ENCODE measurements at regions of chr14 and their contacts with region 1.

Region 1: DNA sequence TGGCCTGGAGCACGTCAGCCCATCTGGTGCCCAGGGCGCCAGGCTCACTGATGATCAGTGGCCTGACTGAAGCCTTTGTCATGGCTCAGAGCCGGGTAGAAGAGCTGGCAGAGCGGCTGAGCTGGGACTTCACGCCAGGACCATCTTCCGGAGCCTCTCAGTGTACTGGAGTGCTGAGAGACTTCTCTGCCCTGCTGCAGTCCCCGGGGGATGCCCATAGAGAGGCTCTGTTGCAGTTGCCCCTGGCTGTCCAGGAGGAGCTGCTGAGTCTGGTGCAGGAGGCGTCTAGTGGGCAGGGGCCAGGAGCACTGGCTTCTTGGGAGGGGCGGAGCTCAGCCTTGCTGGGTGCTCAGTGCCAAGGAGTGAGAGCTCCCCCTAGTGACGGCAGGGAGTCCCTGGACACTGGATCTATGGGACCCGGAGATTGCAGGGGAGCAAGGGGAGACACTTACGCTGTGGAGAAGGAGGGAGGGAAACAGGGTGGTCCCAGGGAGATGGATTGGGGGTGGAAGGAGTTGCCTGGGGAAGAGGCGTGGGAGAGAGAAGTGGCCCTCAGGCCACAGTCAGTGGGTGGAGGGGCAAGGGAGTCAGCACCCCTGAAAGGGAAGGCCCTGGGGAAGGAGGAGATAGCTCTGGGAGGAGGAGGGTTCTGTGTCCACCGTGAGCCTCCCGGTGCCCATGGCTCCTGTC is 2.0 kb downstream of the KHNYN start:
- DNase-seq: peak; percentile 93
- H3K4me3 ChIP-seq: peak overlapping the region; percentile 71 to 87
- H3K27ac ChIP-seq: peak overlapping the region in 1 of 2 experiments; percentile 40; a peak in 1 of 4 replicates
- H3K4me1 ChIP-seq: peaks cover 21 to 26% of the 10 kb centered on the region in 2 experiments; a peak in 2 of 4 replicates
- H3K27me3 ChIP-seq: no peaks in the 10 kb centered on the region
- CTCF ChIP-seq: peak; percentile 96
- EP300 ChIP-seq: no peak
- RAD21 ChIP-seq: peak; percentile 94

Region 2: GRCh38 chr14:24299255-24300195 is 132.2 kb before region 1 on chr14 and contains the starts of genes DHRS1 and NOP9:
- CTCF ChIA-PET with region 1: interaction called, 26 read pairs
- POLR2A ChIA-PET with region 1: no interaction called
- DNase-seq: peak; percentile 97
- H3K4me3 ChIP-seq: peak within 1 kb of the TSS; percentile 92 to 93
- H3K27ac ChIP-seq: peak within 1 kb of the TSS; percentile 63 to 69; a peak in 3 of 4 replicates
- H3K4me1 ChIP-seq: peaks cover 13 to 14% of the 10 kb centered on the region in 2 experiments
- H3K27me3 ChIP-seq: no peaks in the 10 kb centered on the region
- CTCF ChIP-seq: no peak
- EP300 ChIP-seq: no peak
- RAD21 ChIP-seq: no peak
- polyA plus RNA-seq, gene DHRS1: 65.4 and 71.7 TPM in 2 replicates
- polyA plus RNA-seq, gene NOP9: 11.9 and 17.2 TPM in 2 replicates

Region 3: GRCh38 chr14:24327303-24327702 is 104.4 kb before region 1 on chr14:
- CTCF ChIA-PET with region 1: interaction called, 445 read pairs
- POLR2A ChIA-PET with region 1: interaction called, 4 read pairs
- DNase-seq: no peak
- H3K4me3 ChIP-seq: no peak overlapping the region
- H3K27ac ChIP-seq: no peak overlapping the region
- H3K4me1 ChIP-seq: peaks cover 0 to 7% of the 10 kb centered on the region in 2 experiments; a peak in 1 of 4 replicates
- H3K27me3 ChIP-seq: no peaks in the 10 kb centered on the region
- CTCF ChIP-seq: no peak
- EP300 ChIP-seq: no peak
- RAD21 ChIP-seq: no peak

Region 4: DNA sequence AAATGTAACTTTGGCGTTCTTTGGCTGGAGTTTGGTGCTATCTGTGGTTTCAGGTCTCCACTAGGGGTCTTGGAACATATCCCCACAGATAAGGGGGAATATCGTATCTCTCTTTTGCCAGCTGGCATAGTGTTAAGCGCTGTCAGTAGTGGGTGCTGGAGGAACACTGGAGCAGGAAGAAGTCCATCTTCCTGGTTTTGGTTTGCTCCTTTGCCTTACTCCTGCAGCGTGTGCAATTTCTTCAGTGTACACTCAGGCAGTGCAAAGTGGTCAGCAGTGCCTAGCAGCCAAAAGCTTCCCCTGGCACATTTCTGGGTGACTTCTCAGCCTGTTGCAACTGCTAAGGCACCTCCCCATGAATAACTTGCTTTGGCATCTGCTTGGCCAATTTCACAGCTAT is 80.2 kb before region 1 on chr14:
- CTCF ChIA-PET with region 1: interaction called, 28 read pairs
- POLR2A ChIA-PET with region 1: no interaction called
- DNase-seq: no peak
- H3K4me3 ChIP-seq: no peak overlapping the region
- H3K27ac ChIP-seq: no peak overlapping the region
- H3K4me1 ChIP-seq: no peaks in the 10 kb centered on the region; a peak in 1 of 4 replicates
- H3K27me3 ChIP-seq: peaks cover 64% of the 10 kb centered on the region
- CTCF ChIP-seq: peak; percentile 17; the same call in 1 of the 2 replicates
- EP300 ChIP-seq: no peak
- RAD21 ChIP-seq: peak; percentile 26; the same call in 1 of the 2 replicates

Region 5: DNA sequence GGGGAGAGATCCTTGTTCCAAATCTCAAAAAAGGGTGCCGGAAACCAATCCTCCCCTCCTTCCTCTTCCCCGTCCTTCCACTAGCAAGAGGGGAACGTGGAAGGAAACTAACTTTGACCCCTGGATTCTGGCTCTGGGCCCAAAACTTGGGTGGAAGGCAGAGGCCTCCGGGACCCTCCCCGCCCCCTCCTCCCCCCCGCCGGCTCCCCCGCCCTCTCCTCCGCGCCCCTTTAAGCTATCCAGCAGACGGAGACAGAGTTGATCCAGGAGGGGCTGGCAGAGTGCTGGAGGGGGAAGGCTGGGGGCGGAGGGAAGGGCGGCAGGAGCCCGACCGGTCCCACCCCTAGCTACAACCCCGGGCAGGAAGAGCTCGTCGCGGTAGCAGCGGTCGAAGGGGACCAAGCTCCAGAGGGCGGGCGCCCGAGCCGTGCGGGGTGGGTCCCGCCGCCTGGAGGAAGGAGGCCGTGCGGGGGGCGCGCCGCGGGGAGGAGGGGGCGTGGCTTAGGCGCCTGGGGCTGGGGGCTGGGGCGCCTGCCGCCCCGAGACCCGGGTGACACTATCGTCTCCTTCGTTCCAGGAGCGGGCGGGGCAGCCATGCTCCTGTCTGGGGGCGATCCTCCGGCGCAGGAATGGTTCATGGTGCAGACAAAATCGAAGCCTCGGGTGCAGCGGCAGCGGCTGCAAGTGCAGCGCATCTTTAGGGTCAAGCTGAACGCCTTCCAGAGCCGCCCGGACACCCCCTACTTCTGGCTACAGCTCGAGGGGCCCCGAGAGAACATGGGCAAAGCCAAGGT is 32.9 kb before region 1 on chr14 and contains the start of gene NYNRIN:
- CTCF ChIA-PET with region 1: interaction called, 38 read pairs
- POLR2A ChIA-PET with region 1: interaction called, 5 read pairs
- DNase-seq: peak; percentile 87
- H3K4me3 ChIP-seq: peak within 1 kb of the TSS; percentile 66 to 73
- H3K27ac ChIP-seq: peak within 1 kb of the TSS in 1 of 2 experiments; percentile 72; a peak in 1 of 4 replicates
- H3K4me1 ChIP-seq: peaks cover 0 to 32% of the 10 kb centered on the region in 2 experiments; a peak in 1 of 4 replicates
- H3K27me3 ChIP-seq: no peaks in the 10 kb centered on the region
- CTCF ChIP-seq: no peak
- EP300 ChIP-seq: no peak
- RAD21 ChIP-seq: no peak
- polyA plus RNA-seq, gene NYNRIN: 4.7 and 4.8 TPM in 2 replicates

Region 6: DNA sequence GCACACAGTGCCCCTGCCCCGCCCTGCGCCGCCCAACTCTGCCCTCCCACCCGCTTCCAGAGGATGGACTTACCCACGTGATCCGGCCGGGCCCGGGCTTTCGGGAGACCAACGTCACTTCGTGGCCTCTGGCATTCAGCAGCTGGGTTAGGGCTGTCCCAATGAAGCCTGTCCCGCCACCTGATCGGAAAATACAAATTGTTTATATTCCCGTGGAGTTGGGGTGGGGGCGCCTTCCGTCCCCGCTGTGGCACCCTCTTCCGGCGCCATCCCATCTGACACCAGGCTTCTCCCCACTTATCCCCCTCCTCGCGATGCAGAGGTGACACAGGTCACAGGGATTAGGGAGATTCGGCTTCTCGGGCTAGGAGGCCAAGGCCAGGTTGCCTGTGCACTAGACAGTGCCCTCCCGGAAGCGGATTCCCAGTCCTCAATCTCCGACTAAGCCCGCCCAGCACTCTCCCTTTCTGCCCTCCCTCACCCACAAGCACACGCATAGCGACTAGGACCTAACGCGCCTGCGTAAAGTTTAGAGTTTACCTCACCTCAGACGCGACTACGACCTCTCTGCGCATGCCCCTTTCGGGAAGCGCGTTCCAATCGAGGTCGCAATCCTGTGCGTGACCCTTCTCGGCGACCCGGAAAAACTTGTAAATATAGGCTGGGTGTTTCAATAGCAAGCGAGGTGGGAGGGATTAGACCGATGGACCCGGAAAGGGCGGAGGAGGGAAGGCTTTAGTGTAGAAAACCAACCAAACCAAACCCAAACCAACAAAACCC is 10.7 kb after region 1 on chr14 and contains the start of gene SDR39U1:
- CTCF ChIA-PET with region 1: interaction called, 39 read pairs
- POLR2A ChIA-PET with region 1: interaction called, 4 read pairs
- DNase-seq: peak; percentile 92
- H3K4me3 ChIP-seq: peak within 1 kb of the TSS; percentile 61 to 75
- H3K27ac ChIP-seq: peak within 1 kb of the TSS; percentile 97 to 98
- H3K4me1 ChIP-seq: peaks cover 0 to 17% of the 10 kb centered on the region in 2 experiments; a peak in 2 of 4 replicates
- H3K27me3 ChIP-seq: no peaks in the 10 kb centered on the region
- CTCF ChIP-seq: no peak
- EP300 ChIP-seq: no peak
- RAD21 ChIP-seq: no peak
- polyA plus RNA-seq, gene SDR39U1: 81.8 and 88.4 TPM in 2 replicates

Region 7: DNA sequence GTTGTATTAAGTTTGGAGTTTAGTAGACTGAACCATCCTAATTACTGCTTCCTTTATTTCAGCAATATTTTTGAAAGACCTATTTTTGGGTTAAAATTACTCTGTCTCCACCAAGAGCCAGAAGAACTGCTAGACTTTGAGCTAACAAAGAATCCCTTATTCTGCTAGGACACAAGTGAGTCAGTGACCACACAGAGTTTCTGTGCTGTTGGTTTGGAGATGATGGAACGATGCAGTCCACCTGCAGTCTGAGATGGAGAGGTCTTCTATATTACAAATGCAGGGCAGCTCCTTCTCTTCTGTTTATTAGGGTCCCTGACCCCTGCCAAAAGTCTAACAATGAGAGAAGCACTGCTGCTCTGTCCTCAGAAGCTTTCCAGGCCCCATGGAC is 625.0 kb after region 1 on chr14:
- CTCF ChIA-PET with region 1: no interaction called
- POLR2A ChIA-PET with region 1: no interaction called
- DNase-seq: no peak
- H3K4me3 ChIP-seq: no peak overlapping the region
- H3K27ac ChIP-seq: no peak overlapping the region
- H3K4me1 ChIP-seq: no peaks in the 10 kb centered on the region
- H3K27me3 ChIP-seq: peaks cover 5% of the 10 kb centered on the region
- CTCF ChIP-seq: no peak
- EP300 ChIP-seq: no peak
- RAD21 ChIP-seq: no peak

Measured in SK-N-SH (cell line).